ENCODE measurements at regions of chr10 and their contacts with region 1.

Region 1: GRCh38 chr10:68901104-68901927 is at the start of gene DDX50:
- DNase-seq: peak; percentile 94 to 99
- H3K4me3 ChIP-seq: peak within 1 kb of the TSS; percentile 87 to 96
- H3K27ac ChIP-seq: peak within 1 kb of the TSS; percentile 93 to 100
- H3K4me1 ChIP-seq: peaks cover 2 to 16% of the 10 kb centered on the region in 2 donors
- H3K27me3 ChIP-seq: no peaks in the 10 kb centered on the region
- CTCF ChIP-seq: peak in 2 of 3 experiments; percentile 12
- total RNA-seq, gene DDX50: 40.7 TPM

Region 2: DNA sequence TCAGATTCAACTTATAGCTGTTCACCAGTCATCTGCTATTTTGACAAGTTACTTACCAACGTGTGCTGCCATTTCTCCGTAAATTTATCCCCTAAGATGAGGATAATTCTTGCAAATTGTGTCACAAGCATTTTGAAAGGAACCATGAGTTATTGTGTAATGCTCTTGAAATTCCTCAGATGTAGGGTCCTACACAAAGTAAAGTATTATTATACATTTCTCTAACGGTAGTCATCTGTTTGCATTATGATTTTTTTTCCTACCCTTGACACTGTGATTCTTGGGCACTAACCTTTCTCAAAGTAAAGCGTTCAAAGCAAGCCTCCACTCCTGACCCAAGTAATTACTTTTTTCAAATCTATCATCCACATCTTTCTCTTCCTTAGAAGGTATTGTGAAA is 834.3 kb before region 1 on chr10:
- intact Hi-C with region 1: loop called (anchors 5 kb)
- DNase-seq: no peak
- H3K4me3 ChIP-seq: no peak overlapping the region
- H3K27ac ChIP-seq: no peak overlapping the region
- H3K4me1 ChIP-seq: peaks cover 0 to 3% of the 10 kb centered on the region in 2 donors
- H3K27me3 ChIP-seq: no peaks in the 10 kb centered on the region
- CTCF ChIP-seq: no peak

Region 3: DNA sequence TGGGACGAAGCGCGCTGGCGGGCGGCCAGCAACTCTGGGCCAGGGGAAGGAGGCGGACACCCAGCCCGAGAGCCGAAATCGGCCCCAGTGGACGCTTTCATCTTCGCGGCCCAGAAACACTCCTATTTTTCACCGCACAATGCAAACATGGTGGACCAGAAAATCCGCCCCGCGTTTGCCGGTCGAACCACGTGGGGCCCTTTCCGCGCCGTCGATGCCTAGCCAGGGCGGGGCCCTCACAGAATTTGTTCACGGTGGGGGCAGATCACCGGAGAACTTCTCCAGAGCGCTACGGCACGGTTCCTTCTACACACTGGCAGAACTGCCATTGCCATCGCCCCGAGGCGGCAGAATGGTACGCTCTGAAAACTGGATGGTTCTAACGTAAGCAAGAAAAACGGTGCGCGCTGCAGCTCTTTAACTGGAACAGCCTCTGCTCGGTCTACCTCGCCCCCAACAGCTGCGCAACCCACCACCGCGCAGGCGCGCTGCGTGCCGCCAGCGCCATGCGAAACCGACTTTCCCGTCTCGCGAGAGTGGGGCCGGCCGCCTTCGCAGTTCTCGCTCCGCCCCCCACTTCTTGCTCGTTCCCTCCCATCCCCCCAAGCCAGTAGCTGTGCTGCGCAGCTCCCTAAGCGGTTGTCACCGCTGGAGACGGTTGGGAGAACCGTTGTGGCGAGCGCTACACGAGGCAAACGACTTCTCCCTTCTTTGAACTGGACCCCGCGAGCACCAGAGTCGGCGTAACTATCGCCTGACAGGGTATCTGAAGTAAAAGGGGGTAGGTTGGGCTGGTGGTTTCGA is 569.7 kb before region 1 on chr10 and contains the start of gene HNRNPH3:
- intact Hi-C with region 1: loop called (anchors 1 kb)
- DNase-seq: peak; percentile 85 to 98
- H3K4me3 ChIP-seq: peak within 1 kb of the TSS; percentile 94 to 98
- H3K27ac ChIP-seq: peak within 1 kb of the TSS; percentile 100
- H3K4me1 ChIP-seq: peaks cover 4 to 5% of the 10 kb centered on the region in 2 donors
- H3K27me3 ChIP-seq: no peaks in the 10 kb centered on the region
- CTCF ChIP-seq: no peak
- total RNA-seq, gene HNRNPH3: 12.6 TPM

Region 4: GRCh38 chr10:68462536-68462935 is 438.8 kb before region 1 on chr10:
- intact Hi-C with region 1: no loop called
- DNase-seq: no peak
- H3K4me3 ChIP-seq: no peak overlapping the region
- H3K27ac ChIP-seq: no peak overlapping the region
- H3K4me1 ChIP-seq: no peaks in the 10 kb centered on the region
- H3K27me3 ChIP-seq: no peaks in the 10 kb centered on the region
- CTCF ChIP-seq: no peak

Region 5: GRCh38 chr10:68526626-68527307 is 374.5 kb before region 1 on chr10:
- intact Hi-C with region 1: loop called (anchors 1 kb)
- DNase-seq: no peak
- H3K4me3 ChIP-seq: peak overlapping the region; percentile 94 to 95
- H3K27ac ChIP-seq: peak overlapping the region; percentile 95 to 97
- H3K4me1 ChIP-seq: no peaks in the 10 kb centered on the region
- H3K27me3 ChIP-seq: no peaks in the 10 kb centered on the region
- CTCF ChIP-seq: no peak

Region 6: GRCh38 chr10:68792115-68792514 is 109.2 kb before region 1 on chr10:
- intact Hi-C with region 1: loop called (anchors 5 kb)
- DNase-seq: no peak
- H3K4me3 ChIP-seq: no peak overlapping the region
- H3K27ac ChIP-seq: no peak overlapping the region
- H3K4me1 ChIP-seq: no peaks in the 10 kb centered on the region
- H3K27me3 ChIP-seq: no peaks in the 10 kb centered on the region
- CTCF ChIP-seq: peak in 1 of 3 experiments; percentile 19

Region 7: DNA sequence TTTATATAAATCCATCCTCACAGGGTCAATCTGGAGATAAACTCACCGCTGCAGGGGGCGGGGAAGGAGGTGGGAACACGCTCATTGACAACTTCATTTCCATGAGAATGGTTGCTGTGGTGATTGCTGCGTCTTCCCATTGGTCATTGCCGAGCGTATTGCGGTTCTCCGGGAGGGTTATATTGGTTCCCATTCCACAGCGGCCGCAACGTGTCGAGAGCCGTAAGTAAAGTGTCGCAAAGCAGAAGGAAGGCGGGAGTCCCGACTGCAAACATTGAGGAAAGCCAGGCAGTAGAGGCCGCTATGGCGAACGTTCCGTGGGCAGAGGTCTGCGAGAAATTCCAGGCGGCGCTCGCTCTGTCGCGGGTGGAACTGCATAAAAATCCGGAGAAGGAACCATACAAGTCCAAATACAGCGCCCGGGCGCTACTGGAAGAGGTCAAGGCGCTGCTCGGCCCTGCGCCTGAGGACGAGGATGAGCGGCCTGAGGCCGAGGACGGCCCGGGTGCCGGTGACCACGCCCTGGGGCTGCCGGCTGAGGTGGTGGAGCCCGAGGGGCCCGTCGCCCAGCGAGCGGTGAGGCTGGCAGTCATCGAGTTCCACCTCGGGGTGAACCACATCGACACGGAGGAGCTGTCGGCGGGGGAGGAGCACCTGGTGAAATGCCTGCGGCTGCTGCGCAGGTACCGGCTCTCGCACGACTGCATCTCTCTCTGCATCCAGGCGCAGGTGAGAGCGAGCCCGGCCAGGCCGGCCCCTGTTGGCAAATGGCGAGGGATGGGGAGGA is 87.4 kb after region 1 on chr10 and contains the start of gene KIFBP:
- intact Hi-C with region 1: loop called (anchors 2 kb)
- DNase-seq: peak; percentile 89 to 98
- H3K4me3 ChIP-seq: peak within 1 kb of the TSS; percentile 71 to 85
- H3K27ac ChIP-seq: peak within 1 kb of the TSS; percentile 85 to 88
- H3K4me1 ChIP-seq: peaks cover 5 to 36% of the 10 kb centered on the region in 2 donors
- H3K27me3 ChIP-seq: no peaks in the 10 kb centered on the region
- CTCF ChIP-seq: peak; percentile 28 to 61 (median 56)
- total RNA-seq, gene KIFBP: 25.3 TPM

Region 8: GRCh38 chr10:69092959-69093850 is 191.9 kb after region 1 on chr10:
- intact Hi-C with region 1: no loop called
- DNase-seq: peak in 1 of 2 donors; percentile 93
- H3K4me3 ChIP-seq: peak overlapping the region in 1 of 2 donors; percentile 65
- H3K27ac ChIP-seq: peak overlapping the region in 1 of 2 donors; percentile 9
- H3K4me1 ChIP-seq: peaks cover 0 to 4% of the 10 kb centered on the region in 2 donors
- H3K27me3 ChIP-seq: no peaks in the 10 kb centered on the region
- CTCF ChIP-seq: peak; percentile 77 to 81 (median 81)

Measured in ascending aorta (tissue), 2 donors.